Naive thymus-derived CD4-positive, alpha-beta T cell (primary cell): ENCODE measurements at regions of chr19 and their contacts with region 1.

Region 1: GRCh38 chr19:44988896-44989556 is 12.2 kb upstream of the RELB start:
- DNase-seq: peak; percentile 34 to 64 (median 55)
- ATAC-seq: peak; percentile 86
- H3K4me3 ChIP-seq: no peak overlapping the region
- H3K4me3 Mint-ChIP-seq: no peak overlapping the region
- H3K27ac ChIP-seq: no peak overlapping the region
- H3K27ac Mint-ChIP-seq: peak overlapping the region in 2 of 9 donors; percentile 41 to 85
- H3K4me1 ChIP-seq: no peaks in the 10 kb centered on the region
- H3K4me1 Mint-ChIP-seq: peaks cover 0 to 2% (median 0%) of the 10 kb centered on the region in 7 donors
- H3K27me3 ChIP-seq: no peaks in the 10 kb centered on the region
- H3K27me3 Mint-ChIP-seq: no peaks in the 10 kb centered on the region

Region 2: GRCh38 chr19:45340232-45340898 is 351.3 kb after region 1 on chr19 and contains the start of gene KLC3:
- CTCF ChIA-PET with region 1: no interaction called
- POLR2A ChIA-PET with region 1: no interaction called
- intact Hi-C with region 1: loop called in 1 of 2 experiments (anchors 1 kb)
- DNase-seq: peak in 8 of 9 donors; percentile 12 to 66 (median 28)
- ATAC-seq: peak; percentile 28
- H3K4me3 ChIP-seq: no peak within 1 kb of the TSS
- H3K4me3 Mint-ChIP-seq: peak within 1 kb of the TSS; percentile 56 to 82 (median 74)
- H3K27ac ChIP-seq: no peak within 1 kb of the TSS
- H3K27ac Mint-ChIP-seq: peak within 1 kb of the TSS in 2 of 9 donors; percentile 46 to 71
- H3K4me1 ChIP-seq: no peaks in the 10 kb centered on the region
- H3K4me1 Mint-ChIP-seq: peaks cover 4 to 11% (median 9%) of the 10 kb centered on the region in 7 donors
- H3K27me3 ChIP-seq: peaks cover 0 to 12% of the 10 kb centered on the region in 2 donors
- H3K27me3 Mint-ChIP-seq: peaks cover 24 to 39% (median 30%) of the 10 kb centered on the region in 5 donors
- total RNA-seq, gene KLC3: not detected